Tibial artery (tissue), 4 donors: ENCODE measurements at regions of chr11 and their contacts with region 1.

Region 1: GRCh38 chr11:2420502-2421225 is 20.1 kb downstream of the TSSC4 start:
- DNase-seq: peak in 1 of 2 donors; percentile 53
- H3K4me3 ChIP-seq: no peak overlapping the region
- H3K27ac ChIP-seq: no peak overlapping the region
- H3K4me1 ChIP-seq: peaks cover 0 to 11% (median 3%) of the 10 kb centered on the region in 4 donors
- H3K27me3 ChIP-seq: peaks cover 0 to 54% of the 10 kb centered on the region in 2 donors
- CTCF ChIP-seq: peak; percentile 91 to 94

Region 2: DNA sequence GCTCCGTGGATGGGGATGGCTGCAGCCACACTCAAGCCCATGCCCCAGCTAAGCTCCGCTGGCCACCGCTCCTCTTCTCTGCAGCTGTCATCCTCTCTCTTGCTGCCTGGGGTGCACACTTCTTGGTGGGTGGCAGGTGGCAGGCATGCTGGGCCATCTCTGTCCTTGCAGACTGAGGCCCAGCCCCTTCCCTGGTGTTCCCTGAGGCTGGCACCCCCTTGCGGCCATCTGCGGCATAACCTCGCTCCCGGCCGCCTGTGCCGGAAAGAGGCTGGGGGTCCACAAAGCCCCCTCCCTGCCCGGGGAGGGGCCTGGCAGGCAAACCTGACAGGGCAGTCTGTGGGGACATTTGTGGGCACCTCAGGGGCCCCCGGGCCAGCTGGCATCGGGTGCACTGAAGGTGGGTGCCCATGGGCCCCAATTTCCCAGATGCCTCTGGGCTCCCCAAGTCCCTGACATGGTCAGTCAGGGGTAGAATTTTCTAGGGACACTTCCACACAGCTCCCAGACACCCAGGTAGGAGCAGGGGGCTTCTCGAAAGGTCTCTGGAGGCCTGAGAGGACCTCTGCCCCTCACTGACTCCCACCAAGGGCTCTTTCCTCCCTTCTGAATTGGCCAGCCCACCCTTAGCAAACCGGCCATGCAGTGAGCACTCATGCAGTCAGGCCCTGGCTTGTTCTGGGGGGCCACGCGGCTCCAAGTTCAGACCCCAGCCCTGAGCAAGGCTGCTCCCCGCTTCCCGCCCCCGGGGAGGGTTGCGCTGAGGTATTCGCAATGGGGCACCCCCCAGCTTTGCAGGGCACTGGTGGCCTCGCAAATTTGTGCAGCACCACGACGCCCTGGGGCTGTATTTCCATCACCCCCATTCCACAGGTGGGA is 225.5 kb before region 1 on chr11:
- intact Hi-C with region 1: loop called (anchors 2 kb)
- DNase-seq: no peak
- H3K4me3 ChIP-seq: no peak overlapping the region
- H3K27ac ChIP-seq: no peak overlapping the region
- H3K4me1 ChIP-seq: no peaks in the 10 kb centered on the region
- H3K27me3 ChIP-seq: peaks cover 0 to 58% of the 10 kb centered on the region in 2 donors
- CTCF ChIP-seq: peak; percentile 53 to 68

Region 3: GRCh38 chr11:2892215-2893020 is 471.8 kb after region 1 on chr11:
- intact Hi-C with region 1: loop called (anchors 10 kb)
- DNase-seq: peak in 1 of 2 donors; percentile 76
- H3K4me3 ChIP-seq: peak overlapping the region; percentile 39 to 51
- H3K27ac ChIP-seq: peak overlapping the region in 1 of 2 donors; percentile 43
- H3K4me1 ChIP-seq: peaks cover 0 to 33% (median 14%) of the 10 kb centered on the region in 4 donors
- H3K27me3 ChIP-seq: peaks cover 0 to 23% of the 10 kb centered on the region in 2 donors
- CTCF ChIP-seq: peak; percentile 80 to 86